Activated CD4-positive, alpha-beta T cell treated with anti-CD3 and anti-CD28 coated beads, Interleukin-2, amount 10 ng/mL, durations not matched to agents 7 days and 5 days (primary cell): ENCODE measurements at regions of chr11 and their contacts with region 1.

Region 1: DNA sequence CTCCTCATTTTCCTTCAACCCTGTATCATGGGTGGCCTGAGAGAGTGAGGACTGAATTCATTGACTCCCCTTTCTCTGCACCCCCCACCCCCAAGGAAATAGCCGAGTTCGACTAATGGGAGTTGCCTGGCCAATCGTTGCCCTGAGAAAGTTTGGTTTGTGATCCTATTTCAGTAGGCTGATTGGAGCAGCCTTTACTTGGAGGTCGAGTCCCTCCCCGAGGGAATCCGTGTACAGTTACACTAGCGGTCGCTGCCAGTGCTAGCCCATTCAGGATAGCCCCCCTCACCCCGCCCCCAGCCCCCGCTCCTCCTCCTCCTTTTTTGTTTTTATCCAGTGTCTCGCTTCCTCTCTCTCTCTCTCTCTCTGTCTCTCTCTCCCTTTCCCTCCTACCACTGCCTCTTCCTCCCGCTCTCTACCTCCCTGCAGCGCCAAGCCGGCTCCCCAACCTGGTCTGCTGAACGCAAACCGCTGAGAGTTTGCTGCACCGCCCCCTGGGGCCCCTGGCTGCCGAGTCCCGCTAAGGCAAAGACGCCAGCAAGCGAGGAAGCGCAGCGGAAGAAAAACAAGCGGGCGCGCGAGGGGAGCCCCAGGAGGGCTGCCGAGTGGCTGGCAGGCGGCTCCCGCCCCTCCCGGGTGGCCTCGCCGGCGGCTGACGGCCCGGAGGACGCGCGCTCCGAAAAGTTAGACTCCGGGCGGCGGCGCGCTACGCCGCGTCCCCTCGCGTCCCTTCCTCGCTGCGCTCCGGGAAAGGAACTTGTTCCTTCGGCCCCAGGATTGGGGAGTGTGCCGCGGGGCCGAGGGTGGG is at the start of gene GRAMD1B:
- DNase-seq: peak; percentile 90
- H3K4me3 Mint-ChIP-seq: peak within 1 kb of the TSS; percentile 93
- H3K27ac Mint-ChIP-seq: peak within 1 kb of the TSS; percentile 95
- H3K4me1 Mint-ChIP-seq: peaks cover 52% of the 10 kb centered on the region
- H3K27me3 Mint-ChIP-seq: no peaks in the 10 kb centered on the region
- total RNA-seq, gene GRAMD1B: 35.3 to 36.3 TPM

Region 2: GRCh38 chr11:123174196-123175183 is 255.6 kb before region 1 on chr11:
- CTCF ChIA-PET with region 1: no interaction called
- POLR2A ChIA-PET with region 1: no interaction called
- DNase-seq: no peak
- H3K4me3 Mint-ChIP-seq: no peak overlapping the region
- H3K27ac Mint-ChIP-seq: no peak overlapping the region
- H3K4me1 Mint-ChIP-seq: peaks cover 6% of the 10 kb centered on the region
- H3K27me3 Mint-ChIP-seq: peaks cover 1% of the 10 kb centered on the region

Region 3: GRCh38 chr11:123407130-123407995 is 22.8 kb before region 1 on chr11:
- CTCF ChIA-PET with region 1: interaction called, 38 read pairs
- POLR2A ChIA-PET with region 1: no interaction called
- DNase-seq: peak; percentile 74
- H3K4me3 Mint-ChIP-seq: peak overlapping the region; percentile 68
- H3K27ac Mint-ChIP-seq: no peak overlapping the region
- H3K4me1 Mint-ChIP-seq: peaks cover 48% of the 10 kb centered on the region
- H3K27me3 Mint-ChIP-seq: no peaks in the 10 kb centered on the region

Region 4: GRCh38 chr11:123450623-123451022 is 20.5 kb after region 1 on chr11:
- CTCF ChIA-PET with region 1: interaction called, 18 read pairs
- POLR2A ChIA-PET with region 1: no interaction called
- DNase-seq: no peak
- H3K4me3 Mint-ChIP-seq: no peak overlapping the region
- H3K27ac Mint-ChIP-seq: peak overlapping the region; percentile 86
- H3K4me1 Mint-ChIP-seq: peaks cover 69% of the 10 kb centered on the region
- H3K27me3 Mint-ChIP-seq: no peaks in the 10 kb centered on the region

Region 5: DNA sequence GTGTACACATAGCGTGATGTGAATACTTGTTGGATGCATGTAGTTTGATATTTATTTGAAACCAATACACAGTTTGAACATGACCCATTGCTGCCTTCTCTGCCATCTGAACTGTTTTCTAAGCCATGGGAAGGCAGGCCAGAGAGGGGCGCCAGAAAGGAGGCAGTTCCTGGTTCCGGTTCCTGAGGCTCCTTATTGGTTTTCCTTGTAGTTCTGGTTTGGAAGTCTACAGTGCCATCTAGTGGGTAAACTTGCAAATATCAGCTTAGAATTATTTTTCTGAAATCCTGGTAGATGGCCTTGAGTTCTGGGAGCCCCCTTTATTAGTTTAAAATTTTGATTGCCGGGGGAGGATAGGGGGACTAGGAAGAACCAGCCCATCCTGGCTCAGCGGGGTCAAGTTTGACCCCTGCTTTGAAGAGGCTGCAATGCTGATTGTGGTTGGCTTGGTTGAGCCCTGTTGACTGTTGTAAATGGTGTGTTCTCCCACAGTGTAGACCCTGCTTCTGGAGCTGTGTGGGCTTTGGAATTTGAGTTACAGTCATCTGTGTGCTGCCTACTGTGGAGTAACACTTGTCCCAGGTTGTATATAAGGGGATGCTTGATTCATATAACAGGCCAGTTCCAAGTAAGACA is 48.4 kb after region 1 on chr11:
- CTCF ChIA-PET with region 1: interaction called, 12 read pairs
- POLR2A ChIA-PET with region 1: no interaction called
- DNase-seq: peak; percentile 48
- H3K4me3 Mint-ChIP-seq: no peak overlapping the region
- H3K27ac Mint-ChIP-seq: peak overlapping the region; percentile 25
- H3K4me1 Mint-ChIP-seq: peaks cover 41% of the 10 kb centered on the region
- H3K27me3 Mint-ChIP-seq: no peaks in the 10 kb centered on the region